ENCODE measurements at regions of chr11 and their contacts with region 1.

Region 1: DNA sequence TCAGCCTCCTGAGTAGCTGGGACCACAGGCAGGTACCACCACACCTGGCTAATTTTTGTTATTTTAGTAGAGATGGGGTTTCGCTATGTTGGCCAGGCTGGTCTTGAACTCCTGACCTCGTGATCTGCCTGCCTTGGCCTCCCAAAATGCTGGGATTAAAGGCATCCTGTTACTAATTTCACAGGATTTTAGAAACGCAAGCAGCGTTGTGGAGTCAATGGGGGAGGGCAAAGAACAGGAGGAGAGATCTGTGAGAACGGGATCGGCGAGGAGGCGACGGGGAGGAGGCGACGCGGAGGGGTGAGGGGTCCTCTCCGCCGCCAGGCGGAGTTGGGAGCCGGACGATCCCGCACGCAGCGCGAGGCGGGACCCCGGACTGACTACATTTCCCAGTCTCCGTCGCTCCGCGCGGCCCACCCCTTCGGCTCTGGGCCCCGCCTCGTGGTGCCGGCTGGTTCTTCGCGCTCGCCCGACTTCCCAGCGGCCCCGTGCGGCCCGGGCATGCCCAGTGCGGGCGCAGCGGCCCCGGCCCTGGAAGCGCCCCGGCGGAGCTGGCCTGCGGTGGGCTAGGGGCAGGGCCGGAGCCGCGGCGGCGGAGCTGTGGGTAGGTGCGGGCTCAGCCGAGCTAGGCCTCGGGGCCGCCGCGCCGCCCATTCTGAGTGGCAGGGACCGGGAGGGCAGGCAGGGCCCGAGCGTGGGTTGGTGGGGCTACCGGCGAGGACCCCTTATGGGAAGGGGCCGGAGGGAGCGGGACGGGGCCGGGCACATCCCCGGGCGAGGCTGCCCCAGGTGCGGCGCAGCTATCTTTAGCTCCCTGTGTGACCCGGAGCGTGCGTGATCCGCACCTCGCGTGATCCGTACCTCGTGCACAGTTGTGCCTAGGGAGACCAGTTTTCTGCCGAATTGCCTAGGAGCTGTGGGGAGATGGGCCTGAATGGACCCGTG is at the start of gene EI24:
- DNase-seq: peak; percentile 72
- ATAC-seq: peak; percentile 97
- H3K4me3 ChIP-seq: peak within 1 kb of the TSS; percentile 79
- H3K27ac ChIP-seq: peak within 1 kb of the TSS; percentile 83
- H3K4me1 ChIP-seq: peaks cover 8% of the 10 kb centered on the region
- H3K27me3 ChIP-seq: no peaks in the 10 kb centered on the region
- CTCF ChIP-seq: peak; percentile 55 to 73 (median 65)
- EP300 ChIP-seq: no peak
- POLR2A ChIP-seq: peak; percentile 82
- RAD21 ChIP-seq: peak; percentile 42
- polyA plus RNA-seq, gene EI24: 20.3 to 32.8 TPM

Region 2: DNA sequence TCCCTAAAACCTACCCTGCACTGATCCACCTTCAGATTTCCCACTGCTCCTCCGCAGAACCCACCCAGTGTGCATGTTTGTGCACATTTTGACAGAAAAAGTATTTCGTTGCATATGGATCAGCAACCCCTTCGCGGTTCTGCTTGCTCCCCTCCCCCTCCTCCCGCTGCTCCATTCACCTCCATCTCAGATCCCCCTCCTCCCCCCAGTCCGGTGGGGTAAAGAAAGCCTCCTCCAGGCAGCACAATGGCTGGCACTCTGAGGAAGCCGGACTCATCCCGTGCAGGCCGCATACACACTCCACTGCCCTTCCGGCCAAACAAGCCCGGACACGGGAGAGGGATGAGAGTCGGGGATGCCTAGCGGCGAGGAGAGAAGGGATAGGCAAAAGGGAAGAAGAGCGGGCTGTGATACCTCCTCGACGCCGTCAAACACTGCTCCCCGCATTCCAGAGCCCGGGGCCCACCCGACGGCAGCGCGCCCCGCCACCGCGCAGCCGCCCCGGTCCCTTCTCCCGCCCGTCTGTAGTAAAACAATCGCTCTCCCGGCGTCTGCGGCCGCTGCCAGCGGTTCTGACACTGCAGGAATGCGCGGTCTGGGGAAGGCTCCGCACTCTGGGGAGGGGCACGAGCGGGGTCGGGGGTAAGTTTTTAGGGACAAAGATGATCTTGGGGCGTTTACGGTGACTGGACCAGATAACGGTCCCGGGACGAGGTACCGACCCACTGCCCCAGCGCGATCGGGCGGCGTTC is 74.1 kb before region 1 on chr11:
- CTCF ChIA-PET with region 1: interaction called, 7 read pairs
- POLR2A ChIA-PET with region 1: interaction called, 5 read pairs
- RAD21 ChIA-PET with region 1: interaction called, 4 read pairs
- SMC1A ChIA-PET with region 1: interaction called, 9 read pairs
- in situ Hi-C with region 1: no loop called
- intact Hi-C with region 1: loop called (anchors 1 kb)
- DNase-seq: no peak
- ATAC-seq: peak; percentile 62
- H3K4me3 ChIP-seq: peak overlapping the region; percentile 57
- H3K27ac ChIP-seq: peak overlapping the region; percentile 58
- H3K4me1 ChIP-seq: peaks cover 4% of the 10 kb centered on the region; the same call in 1 of the 2 replicates
- H3K27me3 ChIP-seq: 0 out of 4 replicates have a peak, but pooled peaks cover 0 to 7% of the 10 kb centered on the region in 2 experiments
- CTCF ChIP-seq: no peak
- EP300 ChIP-seq: no peak
- POLR2A ChIP-seq: no peak
- RAD21 ChIP-seq: no peak

Region 3: DNA sequence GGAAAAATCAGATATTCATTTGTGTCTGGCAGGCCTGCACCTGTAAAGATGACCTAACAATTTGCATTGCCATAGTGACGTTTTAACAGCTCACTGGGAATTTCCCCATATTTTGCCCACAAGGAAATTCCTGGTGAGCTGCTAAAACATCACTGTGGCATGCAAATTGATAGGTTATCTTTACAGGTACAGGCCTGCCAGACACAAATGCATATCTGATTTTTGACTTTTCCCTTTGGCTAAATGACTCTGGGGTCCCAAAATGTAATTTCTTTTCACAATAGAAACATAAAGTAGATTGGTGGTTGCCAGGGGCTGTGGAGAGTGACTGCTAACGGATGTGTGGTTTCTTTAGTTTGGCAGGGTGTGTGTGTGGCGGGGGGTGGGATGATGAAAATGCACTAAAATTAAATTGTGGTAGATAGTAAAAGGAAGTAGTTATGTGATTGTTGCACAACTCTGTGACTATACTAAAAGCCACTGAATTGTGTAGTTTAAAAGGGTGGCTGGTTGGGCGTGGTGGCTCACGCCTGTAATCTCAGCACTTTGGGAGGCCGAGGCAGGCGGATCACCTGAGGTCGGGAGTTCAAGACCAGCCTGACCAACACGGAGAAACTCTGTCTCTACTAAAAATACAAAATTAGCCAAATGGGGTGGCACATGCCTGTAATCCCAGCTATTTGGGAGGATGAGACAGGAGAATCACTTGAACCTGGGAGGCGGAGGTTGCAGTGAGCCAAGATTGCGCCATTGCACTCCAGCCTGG is 54.7 kb before region 1 on chr11:
- CTCF ChIA-PET with region 1: interaction called, 6 read pairs
- POLR2A ChIA-PET with region 1: interaction called, 22 read pairs
- RAD21 ChIA-PET with region 1: interaction called, 50 read pairs
- SMC1A ChIA-PET with region 1: interaction called, 22 read pairs
- in situ Hi-C with region 1: no loop called
- intact Hi-C with region 1: loop called (anchors 1 kb)
- DNase-seq: peak; percentile 92
- ATAC-seq: peak; percentile 88
- H3K4me3 ChIP-seq: no peak overlapping the region
- H3K27ac ChIP-seq: peak overlapping the region; percentile 80
- H3K4me1 ChIP-seq: peaks cover 46% of the 10 kb centered on the region
- H3K27me3 ChIP-seq: no peaks in the 10 kb centered on the region
- CTCF ChIP-seq: no peak
- EP300 ChIP-seq: peak in 1 of 2 experiments; percentile 86; a peak in 2 of 4 replicates
- POLR2A ChIP-seq: no peak
- RAD21 ChIP-seq: no peak

Region 4: DNA sequence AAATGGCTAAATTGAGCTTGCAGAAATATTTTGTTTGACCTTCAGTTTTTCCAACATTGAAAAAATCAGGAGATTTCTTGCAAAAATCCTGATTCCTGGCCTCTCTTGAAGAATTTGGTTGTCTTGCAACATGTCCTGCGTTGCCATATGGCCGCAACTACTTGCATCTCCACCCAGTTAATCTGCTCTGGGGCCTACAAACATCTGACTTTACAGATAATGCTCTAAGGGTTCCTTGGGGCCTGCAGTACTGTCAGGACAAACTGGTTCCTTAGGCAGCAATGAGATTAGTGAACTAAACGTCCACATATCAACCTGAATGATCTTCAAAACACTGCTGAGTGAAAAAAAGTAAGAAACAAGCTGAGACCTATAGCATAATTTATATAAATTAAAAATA is 36.6 kb before region 1 on chr11:
- CTCF ChIA-PET with region 1: interaction called, 4 read pairs
- POLR2A ChIA-PET with region 1: interaction called, 10 read pairs
- RAD21 ChIA-PET with region 1: interaction called, 3 read pairs
- SMC1A ChIA-PET with region 1: interaction called, 3 read pairs
- in situ Hi-C with region 1: no loop called
- intact Hi-C with region 1: no loop called
- DNase-seq: no peak
- ATAC-seq: no peak
- H3K4me3 ChIP-seq: no peak overlapping the region
- H3K27ac ChIP-seq: no peak overlapping the region
- H3K4me1 ChIP-seq: no peaks in the 10 kb centered on the region
- H3K27me3 ChIP-seq: no peaks in the 10 kb centered on the region
- CTCF ChIP-seq: no peak
- EP300 ChIP-seq: no peak
- POLR2A ChIP-seq: no peak
- RAD21 ChIP-seq: no peak

Region 5: DNA sequence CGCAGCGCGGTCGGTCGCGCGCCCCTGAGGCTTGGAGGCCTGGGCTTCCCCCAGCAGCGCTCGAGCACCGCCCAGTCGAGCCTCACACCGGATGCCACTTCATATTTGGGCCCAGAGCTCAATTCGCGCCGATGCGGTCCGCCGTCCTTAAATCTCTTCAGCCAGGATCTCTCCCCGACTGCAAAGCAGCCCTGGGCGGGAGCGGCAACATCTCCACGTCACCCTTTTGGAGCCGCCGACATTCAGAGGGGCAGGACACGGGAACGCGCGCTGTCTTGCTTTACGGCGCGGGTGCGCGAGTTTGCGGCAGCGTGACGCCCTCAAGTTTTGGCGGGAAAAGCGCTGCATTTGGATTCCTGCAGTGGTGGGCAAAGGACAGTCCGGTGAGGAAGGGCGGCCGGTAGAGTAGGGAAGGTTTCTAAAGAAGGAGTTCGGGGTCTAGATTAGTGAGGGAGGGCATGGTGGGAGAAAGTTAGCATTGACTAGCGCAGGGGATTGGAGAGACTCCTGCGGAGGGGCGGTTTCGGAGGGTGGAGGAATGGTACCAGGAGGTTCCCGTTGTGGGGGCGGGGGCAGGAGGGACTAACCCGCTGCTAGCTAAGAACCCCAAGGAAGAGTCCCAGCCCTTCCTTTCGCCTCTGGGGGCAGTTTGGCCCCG is 56.5 kb after region 1 on chr11:
- CTCF ChIA-PET with region 1: interaction called, 4 read pairs
- POLR2A ChIA-PET with region 1: interaction called, 8 read pairs
- RAD21 ChIA-PET with region 1: interaction called, 4 read pairs
- SMC1A ChIA-PET with region 1: interaction called, 10 read pairs
- in situ Hi-C with region 1: no loop called
- intact Hi-C with region 1: loop called (anchors 1 kb)
- DNase-seq: peak; percentile 77
- ATAC-seq: peak; percentile 92
- H3K4me3 ChIP-seq: peak overlapping the region; percentile 81
- H3K27ac ChIP-seq: peak overlapping the region; percentile 97
- H3K4me1 ChIP-seq: peaks cover 7% of the 10 kb centered on the region; the same call in 1 of the 2 replicates
- H3K27me3 ChIP-seq: no peaks in the 10 kb centered on the region
- CTCF ChIP-seq: no peak
- EP300 ChIP-seq: no peak
- POLR2A ChIP-seq: peak; percentile 99
- RAD21 ChIP-seq: no peak

Region 6: DNA sequence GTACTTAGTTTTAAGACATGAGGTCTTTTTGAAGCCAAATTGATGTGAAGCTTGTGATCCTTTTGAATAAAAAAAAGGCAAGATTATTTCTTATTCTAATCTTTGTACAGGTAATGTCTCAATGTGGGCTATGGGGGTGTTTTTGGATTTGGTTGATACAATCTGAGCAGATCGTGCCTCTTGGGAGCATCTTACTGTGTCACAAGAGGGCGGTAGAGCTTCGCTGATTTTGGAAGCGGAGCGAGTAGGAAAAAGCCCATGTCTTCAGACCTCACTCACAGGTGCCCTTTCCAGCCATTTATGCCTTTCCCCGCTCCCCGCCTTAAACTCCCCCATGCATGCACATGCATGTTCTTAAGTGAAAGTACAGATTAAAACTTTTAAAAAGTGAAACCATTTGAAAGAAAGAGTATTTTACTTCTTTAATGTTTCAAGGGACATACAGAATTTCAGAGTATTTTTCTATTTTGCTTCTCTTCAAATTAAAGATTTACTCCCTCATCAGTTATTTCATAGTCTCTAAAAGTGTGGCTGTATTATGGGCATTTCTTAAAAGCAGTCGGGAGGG is 353.9 kb after region 1 on chr11:
- CTCF ChIA-PET with region 1: no interaction called
- POLR2A ChIA-PET with region 1: no interaction called
- RAD21 ChIA-PET with region 1: no interaction called
- SMC1A ChIA-PET with region 1: no interaction called
- in situ Hi-C with region 1: no loop called
- intact Hi-C with region 1: no loop called
- DNase-seq: peak; percentile 37
- ATAC-seq: peak; percentile 97
- H3K4me3 ChIP-seq: no peak overlapping the region
- H3K27ac ChIP-seq: no peak overlapping the region
- H3K4me1 ChIP-seq: no peaks in the 10 kb centered on the region
- H3K27me3 ChIP-seq: no peaks in the 10 kb centered on the region
- CTCF ChIP-seq: peak; percentile 83 to 89 (median 85)
- EP300 ChIP-seq: no peak
- POLR2A ChIP-seq: no peak
- RAD21 ChIP-seq: peak; percentile 89